Mammary epithelial cell (primary cell): ENCODE measurements at regions of chr11 and their contacts with region 1.

Region 1: GRCh38 chr11:96149743-96150555 is 193.0 kb downstream of the MAML2 start:
- DNase-seq: peak; percentile 61
- H3K4me3 ChIP-seq: no peak overlapping the region
- H3K27ac ChIP-seq: peak overlapping the region; percentile 10
- H3K4me1 ChIP-seq: peaks cover 41% of the 10 kb centered on the region
- H3K27me3 ChIP-seq: no peaks in the 10 kb centered on the region
- CTCF ChIP-seq: no peak

Region 2: GRCh38 chr11:96134602-96135001 is 15.3 kb before region 1 on chr11:
- CTCF ChIA-PET with region 1: interaction called, 10 read pairs
- dilution Hi-C with region 1: no loop called
- in situ Hi-C with region 1: no loop called
- intact Hi-C with region 1: no loop called
- DNase-seq: peak; percentile 55
- H3K4me3 ChIP-seq: no peak overlapping the region
- H3K27ac ChIP-seq: no peak overlapping the region
- H3K4me1 ChIP-seq: no peaks in the 10 kb centered on the region
- H3K27me3 ChIP-seq: no peaks in the 10 kb centered on the region
- CTCF ChIP-seq: no peak